Body of pancreas (tissue), 4 donors: ENCODE measurements at regions of chr2 and their contacts with region 1.

Region 1: DNA sequence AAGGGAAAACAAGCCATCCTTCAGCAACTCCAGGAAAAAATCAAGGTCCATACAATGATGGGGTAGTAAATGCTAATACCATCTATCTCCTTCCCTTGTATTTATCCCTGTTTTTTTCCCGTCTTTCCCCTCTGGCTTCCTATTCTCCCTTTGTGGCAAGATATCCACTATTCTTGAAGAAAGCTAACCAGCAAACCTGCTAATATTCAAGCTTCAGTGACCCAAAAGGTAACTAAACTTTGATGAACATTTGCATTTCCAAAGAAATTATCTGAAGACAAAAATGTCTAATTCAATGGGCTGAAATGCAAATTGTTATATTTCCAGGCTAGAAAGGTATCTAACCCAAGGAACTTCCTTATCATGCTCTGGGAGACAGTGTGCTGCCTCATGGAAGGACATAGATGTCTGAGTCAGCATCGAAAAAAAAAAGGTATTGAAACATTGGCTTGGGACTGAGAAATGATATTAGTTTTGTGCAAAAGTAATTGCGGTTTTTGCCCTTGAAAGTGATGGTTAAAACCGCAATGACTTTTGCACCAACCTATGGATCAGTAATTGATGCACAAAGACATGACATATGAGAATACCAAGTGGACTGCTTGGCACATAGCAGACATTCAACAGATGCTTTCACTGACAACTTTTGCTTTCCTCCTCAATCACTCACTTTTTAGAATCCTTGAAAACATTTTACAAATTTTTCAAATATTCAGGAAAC is 63.7 kb upstream of the HNMT start:
- DNase-seq: no peak
- ATAC-seq: no peak
- H3K4me3 ChIP-seq: no peak overlapping the region
- H3K27ac ChIP-seq: no peak overlapping the region
- H3K4me1 ChIP-seq: no peaks in the 10 kb centered on the region
- H3K27me3 ChIP-seq: no peaks in the 10 kb centered on the region
- CTCF ChIP-seq: no peak
- POLR2A ChIP-seq: no peak

Region 2: GRCh38 chr2:137847443-137847842 is 53.1 kb before region 1 on chr2:
- intact Hi-C with region 1: no loop called
- DNase-seq: no peak
- ATAC-seq: no peak
- H3K4me3 ChIP-seq: no peak overlapping the region
- H3K27ac ChIP-seq: no peak overlapping the region
- H3K4me1 ChIP-seq: no peaks in the 10 kb centered on the region
- H3K27me3 ChIP-seq: no peaks in the 10 kb centered on the region
- CTCF ChIP-seq: no peak
- POLR2A ChIP-seq: no peak

Region 3: GRCh38 chr2:138003411-138003810 is 102.8 kb after region 1 on chr2:
- intact Hi-C with region 1: no loop called
- DNase-seq: no peak
- ATAC-seq: no peak
- H3K4me3 ChIP-seq: no peak overlapping the region
- H3K27ac ChIP-seq: no peak overlapping the region
- H3K4me1 ChIP-seq: no peaks in the 10 kb centered on the region
- H3K27me3 ChIP-seq: no peaks in the 10 kb centered on the region
- CTCF ChIP-seq: no peak
- POLR2A ChIP-seq: no peak

Region 4: GRCh38 chr2:138373993-138374408 is 473.4 kb after region 1 on chr2:
- intact Hi-C with region 1: loop called (anchors 10 kb)
- DNase-seq: peak; percentile 26 to 52 (median 44)
- ATAC-seq: peak; percentile 66
- H3K4me3 ChIP-seq: no peak overlapping the region
- H3K27ac ChIP-seq: no peak overlapping the region
- H3K4me1 ChIP-seq: no peaks in the 10 kb centered on the region
- H3K27me3 ChIP-seq: no peaks in the 10 kb centered on the region
- CTCF ChIP-seq: peak; percentile 24 to 80 (median 71)
- POLR2A ChIP-seq: no peak

Region 5: GRCh38 chr2:138827426-138828054 is 927.0 kb after region 1 on chr2:
- intact Hi-C with region 1: loop called (anchors 10 kb)
- DNase-seq: peak in 2 of 4 donors; percentile 13 to 17
- ATAC-seq: peak; percentile 65
- H3K4me3 ChIP-seq: no peak overlapping the region
- H3K27ac ChIP-seq: no peak overlapping the region
- H3K4me1 ChIP-seq: no peaks in the 10 kb centered on the region
- H3K27me3 ChIP-seq: no peaks in the 10 kb centered on the region
- CTCF ChIP-seq: peak; percentile 54 to 77 (median 66)
- POLR2A ChIP-seq: no peak